PC-3 (cell line): ENCODE measurements at regions of chr1 and their contacts with region 1.

Region 1: DNA sequence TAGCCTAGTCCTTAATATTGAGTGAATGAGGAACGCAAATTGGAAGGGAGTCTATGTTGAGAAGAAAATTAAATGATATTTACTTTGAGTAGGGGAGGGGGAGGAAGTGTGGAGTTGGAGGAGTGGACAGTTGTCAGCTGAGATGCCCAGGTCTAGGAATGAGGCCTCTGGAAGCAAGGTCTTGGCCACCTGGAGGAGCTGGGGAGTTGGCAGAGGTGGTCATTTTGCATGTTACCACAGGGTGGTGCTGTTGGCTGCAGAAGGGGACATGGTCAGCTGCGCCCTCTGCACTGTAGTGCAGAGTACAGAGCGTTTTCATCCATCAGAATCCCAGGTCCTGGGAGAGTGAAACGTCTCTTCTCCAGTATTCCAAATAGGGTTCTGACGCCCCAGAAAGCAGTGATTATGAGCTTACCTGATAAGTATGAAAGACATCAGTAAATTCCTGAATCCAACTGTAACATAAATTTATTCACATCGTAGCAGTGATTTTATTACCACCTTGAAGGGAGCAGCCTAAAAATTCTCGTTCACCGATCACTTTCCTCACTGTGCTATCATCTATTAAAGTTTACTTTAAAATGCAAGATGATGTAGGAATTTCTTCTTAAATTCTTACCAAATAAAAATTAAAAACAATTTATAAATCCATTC is 13.8 kb downstream of the PARK7 start:
- DNase-seq: peak; percentile 91
- ATAC-seq: peak; percentile 99
- H3K4me3 ChIP-seq: no peak overlapping the region
- H3K27ac ChIP-seq: no peak overlapping the region
- H3K4me1 ChIP-seq: no peaks in the 10 kb centered on the region
- H3K27me3 ChIP-seq: no peaks in the 10 kb centered on the region
- CTCF ChIP-seq: peak; percentile 98

Region 2: GRCh38 chr1:7426780-7427604 is 548.3 kb before region 1 on chr1:
- CTCF ChIA-PET with region 1: no interaction called
- POLR2A ChIA-PET with region 1: no interaction called
- intact Hi-C with region 1: no loop called
- DNase-seq: no peak
- ATAC-seq: no peak
- H3K4me3 ChIP-seq: no peak overlapping the region
- H3K27ac ChIP-seq: no peak overlapping the region
- H3K4me1 ChIP-seq: no peaks in the 10 kb centered on the region
- H3K27me3 ChIP-seq: peaks cover 22% of the 10 kb centered on the region
- CTCF ChIP-seq: no peak

Region 3: GRCh38 chr1:7856345-7856744 is 119.0 kb before region 1 on chr1:
- CTCF ChIA-PET with region 1: no interaction called
- POLR2A ChIA-PET with region 1: no interaction called
- intact Hi-C with region 1: no loop called
- DNase-seq: no peak
- ATAC-seq: no peak
- H3K4me3 ChIP-seq: no peak overlapping the region
- H3K27ac ChIP-seq: no peak overlapping the region
- H3K4me1 ChIP-seq: no peaks in the 10 kb centered on the region
- H3K27me3 ChIP-seq: no peaks in the 10 kb centered on the region
- CTCF ChIP-seq: no peak

Region 4: GRCh38 chr1:8090241-8090702 is 114.9 kb after region 1 on chr1:
- CTCF ChIA-PET with region 1: interaction called, 12 read pairs
- POLR2A ChIA-PET with region 1: no interaction called
- intact Hi-C with region 1: no loop called
- DNase-seq: peak; percentile 91
- ATAC-seq: peak; percentile 90
- H3K4me3 ChIP-seq: no peak overlapping the region
- H3K27ac ChIP-seq: peak overlapping the region; percentile 98
- H3K4me1 ChIP-seq: peaks cover 53% of the 10 kb centered on the region
- H3K27me3 ChIP-seq: no peaks in the 10 kb centered on the region
- CTCF ChIP-seq: no peak

Region 5: DNA sequence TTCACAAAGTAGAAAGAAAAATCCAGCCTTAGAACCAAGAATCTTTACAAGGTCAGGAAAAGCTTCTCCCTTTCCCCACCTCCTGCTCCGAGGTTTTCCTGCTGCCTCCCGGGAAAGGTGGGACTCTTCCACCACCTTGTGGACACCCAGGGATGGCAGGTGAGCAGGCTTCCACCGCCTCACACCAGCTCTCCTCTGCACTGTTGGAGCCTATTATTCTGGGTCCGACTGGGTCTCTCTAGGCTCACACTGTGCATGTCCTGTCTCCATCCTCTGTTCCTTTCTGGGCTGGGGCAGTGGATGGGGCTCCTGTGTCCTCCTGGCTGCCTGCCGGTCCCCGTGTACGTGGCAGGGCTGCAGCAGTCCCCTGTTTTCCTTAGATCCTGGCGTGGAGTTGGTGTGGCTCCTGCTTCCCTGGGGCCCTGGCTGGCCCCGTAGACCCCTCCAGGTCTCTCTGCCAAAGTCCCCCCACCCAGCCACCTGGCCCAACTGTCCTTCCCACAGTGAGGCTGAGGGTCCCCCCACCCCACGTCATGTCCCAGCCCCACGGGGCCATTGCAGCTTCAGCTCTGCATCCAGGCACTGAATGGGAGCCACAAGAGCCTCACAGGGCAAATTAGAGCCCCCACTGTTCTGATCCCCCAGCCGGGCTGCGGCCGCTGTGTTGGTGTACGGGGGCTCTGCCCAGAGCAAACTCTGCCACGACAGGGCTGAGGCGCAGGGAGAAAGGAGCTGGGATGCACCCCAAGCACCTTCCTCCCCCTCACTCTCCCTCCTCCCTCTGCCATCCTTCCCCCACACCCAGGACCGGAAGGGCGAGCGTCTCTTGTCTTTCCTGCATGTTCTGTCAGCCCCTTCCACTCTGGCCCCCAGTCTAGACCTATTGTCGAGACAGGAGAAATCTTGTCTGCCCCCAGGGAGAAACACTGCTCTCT is 339.3 kb after region 1 on chr1:
- CTCF ChIA-PET with region 1: interaction called, 9 read pairs
- POLR2A ChIA-PET with region 1: no interaction called
- intact Hi-C with region 1: loop called (anchors 1 kb)
- DNase-seq: peak; percentile 90
- ATAC-seq: peak; percentile 79
- H3K4me3 ChIP-seq: no peak overlapping the region
- H3K27ac ChIP-seq: peak overlapping the region; percentile 62
- H3K4me1 ChIP-seq: peaks cover 29% of the 10 kb centered on the region
- H3K27me3 ChIP-seq: no peaks in the 10 kb centered on the region
- CTCF ChIP-seq: peak; percentile 91

Region 6: GRCh38 chr1:8343464-8344001 is 368.2 kb after region 1 on chr1:
- CTCF ChIA-PET with region 1: interaction called, 5 read pairs
- POLR2A ChIA-PET with region 1: interaction called, 31 read pairs
- intact Hi-C with region 1: loop called (anchors 1 kb)
- DNase-seq: peak; percentile 96
- ATAC-seq: peak; percentile 85
- H3K4me3 ChIP-seq: peak overlapping the region; percentile 48
- H3K27ac ChIP-seq: peak overlapping the region; percentile 87
- H3K4me1 ChIP-seq: peaks cover 15% of the 10 kb centered on the region
- H3K27me3 ChIP-seq: no peaks in the 10 kb centered on the region
- CTCF ChIP-seq: no peak

Region 7: GRCh38 chr1:8348777-8349491 is 373.6 kb after region 1 on chr1:
- CTCF ChIA-PET with region 1: interaction called, 7 read pairs
- POLR2A ChIA-PET with region 1: interaction called, 31 read pairs
- intact Hi-C with region 1: loop called (anchors 1 kb)
- DNase-seq: peak; percentile 68
- ATAC-seq: peak; percentile 71
- H3K4me3 ChIP-seq: no peak overlapping the region
- H3K27ac ChIP-seq: no peak overlapping the region
- H3K4me1 ChIP-seq: peaks cover 4% of the 10 kb centered on the region
- H3K27me3 ChIP-seq: no peaks in the 10 kb centered on the region
- CTCF ChIP-seq: peak; percentile 90